H1 (cell line): ENCODE measurements at regions of chr3 and their contacts with region 1.

Region 1: GRCh38 chr3:97793420-97794019 is 28.3 kb upstream of the CRYBG3 start:
- DNase-seq: no peak
- H3K4me3 ChIP-seq: no peak overlapping the region
- H3K27ac ChIP-seq: no peak overlapping the region
- H3K4me1 ChIP-seq: no peaks in the 10 kb centered on the region
- H3K27me3 ChIP-seq: no peaks in the 10 kb centered on the region
- CTCF ChIP-seq: peak in 2 of 3 experiments; percentile 59 to 64; a peak in 2 of 4 replicates
- EP300 ChIP-seq: no peak
- POLR2A ChIP-seq: no peak
- RAD21 ChIP-seq: peak; percentile 82 to 84

Region 2: GRCh38 chr3:97712919-97713318 is 80.6 kb before region 1 on chr3:
- CTCF ChIA-PET with region 1: no interaction called
- POLR2A ChIA-PET with region 1: no interaction called
- DNase-seq: no peak
- H3K4me3 ChIP-seq: no peak overlapping the region
- H3K27ac ChIP-seq: no peak overlapping the region
- H3K4me1 ChIP-seq: no peaks in the 10 kb centered on the region
- H3K27me3 ChIP-seq: no peaks in the 10 kb centered on the region
- CTCF ChIP-seq: no peak
- EP300 ChIP-seq: no peak
- POLR2A ChIP-seq: no peak
- RAD21 ChIP-seq: no peak

Region 3: DNA sequence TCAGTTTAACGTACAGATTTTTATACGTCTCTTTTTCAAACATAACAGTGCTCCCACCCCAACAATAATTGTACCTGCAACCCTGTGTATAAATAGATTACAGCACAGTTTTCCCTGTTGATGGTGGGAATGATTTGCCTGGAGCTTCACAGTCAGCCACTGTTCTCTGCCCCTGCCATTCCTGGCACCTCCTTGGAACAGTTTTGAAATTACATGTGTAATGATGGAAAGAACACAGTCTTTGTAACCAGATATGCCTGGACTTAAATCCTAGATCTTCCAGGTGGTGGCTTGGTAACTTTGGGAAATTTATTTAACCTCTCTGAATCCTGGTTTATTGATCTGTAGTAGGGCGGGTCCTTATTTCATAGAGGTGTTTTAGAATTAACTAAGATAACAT is 55.3 kb after region 1 on chr3:
- CTCF ChIA-PET with region 1: no interaction called
- POLR2A ChIA-PET with region 1: no interaction called
- DNase-seq: no peak
- H3K4me3 ChIP-seq: no peak overlapping the region
- H3K27ac ChIP-seq: no peak overlapping the region
- H3K4me1 ChIP-seq: no peaks in the 10 kb centered on the region
- H3K27me3 ChIP-seq: peaks cover 0 to 1% (median 0%) of the 10 kb centered on the region in 4 experiments; a peak in 1 of 7 replicates
- CTCF ChIP-seq: no peak
- EP300 ChIP-seq: no peak
- POLR2A ChIP-seq: no peak
- RAD21 ChIP-seq: no peak

Region 4: DNA sequence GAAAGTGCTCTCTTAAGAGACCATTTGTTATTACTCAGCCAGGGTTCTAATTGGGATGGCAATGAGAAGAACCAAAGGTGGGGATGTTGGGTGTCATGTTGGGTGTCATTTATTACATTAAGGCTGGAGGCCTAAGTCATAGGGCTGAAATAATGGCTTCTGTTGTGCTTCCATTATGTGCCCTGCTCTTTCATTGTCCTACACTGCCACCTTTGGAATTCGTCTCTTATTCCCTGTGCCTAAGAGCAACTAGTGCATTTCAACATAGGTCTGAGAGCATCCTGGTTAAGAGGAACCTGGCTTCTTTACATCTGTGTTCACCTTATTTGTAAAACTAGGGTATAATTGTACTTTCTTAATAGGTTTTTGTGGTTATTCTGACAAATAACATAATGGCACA is 146.5 kb after region 1 on chr3:
- CTCF ChIA-PET with region 1: interaction called, 27 read pairs
- POLR2A ChIA-PET with region 1: no interaction called
- DNase-seq: no peak
- H3K4me3 ChIP-seq: no peak overlapping the region
- H3K27ac ChIP-seq: no peak overlapping the region
- H3K4me1 ChIP-seq: no peaks in the 10 kb centered on the region
- H3K27me3 ChIP-seq: no peaks in the 10 kb centered on the region
- CTCF ChIP-seq: peak in 2 of 3 experiments; percentile 19 to 49; a peak in 2 of 4 replicates
- EP300 ChIP-seq: no peak
- POLR2A ChIP-seq: no peak
- RAD21 ChIP-seq: peak; percentile 70 to 75

Region 5: DNA sequence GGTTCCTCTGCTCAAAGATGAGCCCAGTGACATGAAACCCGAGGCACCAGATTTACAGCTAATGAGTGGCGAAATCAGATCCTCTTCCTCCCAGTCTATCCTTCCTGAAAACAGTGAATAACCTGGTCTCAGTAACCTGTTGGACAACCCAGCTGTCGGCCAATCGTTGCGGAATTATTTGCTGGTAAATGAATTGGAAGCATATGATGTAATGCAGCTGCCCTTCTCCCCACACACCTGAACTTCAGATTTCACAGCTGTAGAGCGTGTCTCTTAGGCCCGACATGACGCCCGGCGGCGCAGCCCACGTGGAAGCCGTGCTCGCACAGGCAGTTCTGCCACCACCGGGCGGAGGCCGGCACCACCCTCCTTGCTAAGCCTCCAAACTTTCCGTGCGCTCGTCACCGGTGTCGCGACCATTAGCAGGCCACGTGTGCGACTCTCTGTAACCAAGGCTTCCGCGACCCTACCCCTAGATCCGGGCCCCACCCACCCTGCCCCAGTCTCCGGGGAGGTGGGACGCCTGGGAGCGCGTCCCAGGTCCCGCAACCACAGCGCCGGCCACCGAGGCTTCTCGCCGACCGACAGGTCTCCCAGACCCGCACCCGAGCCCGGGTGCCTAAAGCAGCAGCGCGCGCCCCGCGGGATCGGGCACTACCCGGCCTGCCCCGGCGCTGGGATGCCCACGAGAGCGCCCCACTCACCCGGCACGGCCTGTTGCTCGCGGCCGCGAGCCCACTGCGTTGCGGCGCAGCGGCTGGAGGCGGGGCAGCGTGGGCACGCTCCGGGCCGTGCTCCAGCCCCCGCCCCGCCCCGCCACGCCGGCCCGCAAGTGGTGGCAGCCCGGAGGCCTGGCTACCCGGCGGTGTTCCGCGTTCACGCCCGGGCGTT is 178.4 kb after region 1 on chr3 and contains the start of gene RIOX2:
- CTCF ChIA-PET with region 1: interaction called, 12 read pairs
- POLR2A ChIA-PET with region 1: no interaction called
- DNase-seq: peak in 1 of 2 experiments; percentile 73
- H3K4me3 ChIP-seq: peak within 1 kb of the TSS; percentile 41 to 64 (median 54)
- H3K27ac ChIP-seq: no peak within 1 kb of the TSS
- H3K4me1 ChIP-seq: 0 out of 7 replicates have a peak, but pooled peaks cover 0 to 2% (median 0%) of the 10 kb centered on the region in 4 experiments
- H3K27me3 ChIP-seq: no peaks in the 10 kb centered on the region
- CTCF ChIP-seq: no peak
- EP300 ChIP-seq: no peak
- POLR2A ChIP-seq: no peak; a peak in 1 of 3 replicates
- RAD21 ChIP-seq: no peak
- total RNA-seq, gene RIOX2: 15.5 and 16.4 TPM in 2 replicates

Region 6: DNA sequence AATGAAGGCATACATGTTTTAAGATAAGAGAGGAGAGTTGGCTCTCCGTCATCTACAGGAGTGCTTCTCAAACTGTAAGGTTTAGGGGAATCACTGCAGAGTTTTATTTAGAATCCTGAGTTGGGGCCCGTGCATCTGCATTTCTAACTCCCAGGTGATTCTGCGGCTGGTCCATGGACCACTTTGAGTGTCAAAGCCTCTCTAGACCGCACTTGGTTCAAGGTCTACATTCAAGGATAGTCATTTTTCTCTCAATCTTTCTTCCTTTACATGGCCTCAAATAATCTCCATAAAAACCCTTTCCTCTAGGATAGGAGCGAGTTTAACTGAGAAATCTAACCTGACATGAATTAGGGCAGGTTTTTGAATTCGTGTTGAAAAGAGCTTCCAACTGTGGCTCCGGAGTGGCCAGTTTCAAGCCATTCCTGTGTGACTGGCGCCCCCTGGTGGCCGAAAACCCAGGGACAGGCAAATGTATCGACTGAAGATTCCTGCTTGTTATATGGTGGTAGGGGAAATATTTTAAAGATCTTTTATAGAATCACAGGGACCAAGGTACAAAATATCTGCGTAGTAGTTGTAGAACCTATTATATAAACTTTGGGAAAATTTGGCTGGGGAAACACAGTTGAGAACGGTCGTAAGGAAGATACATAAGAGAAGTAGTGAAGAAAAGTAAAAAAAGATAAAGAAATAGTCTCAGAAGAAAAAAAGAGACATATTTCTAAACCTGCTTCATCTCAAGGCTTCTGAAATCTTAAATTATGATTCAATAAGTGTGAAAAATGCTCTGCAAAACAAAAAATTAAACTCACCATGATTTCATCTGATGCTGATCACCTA is 229.7 kb after region 1 on chr3:
- CTCF ChIA-PET with region 1: interaction called, 36 read pairs
- POLR2A ChIA-PET with region 1: no interaction called
- DNase-seq: peak; percentile 71 to 99
- H3K4me3 ChIP-seq: no peak overlapping the region
- H3K27ac ChIP-seq: no peak overlapping the region
- H3K4me1 ChIP-seq: no peaks in the 10 kb centered on the region
- H3K27me3 ChIP-seq: no peaks in the 10 kb centered on the region
- CTCF ChIP-seq: peak; percentile 74 to 91 (median 83)
- EP300 ChIP-seq: no peak
- POLR2A ChIP-seq: no peak
- RAD21 ChIP-seq: peak; percentile 95 to 96